GM12878 (cell line): ENCODE measurements at regions of chr4 and their contacts with region 1.

Region 1: GRCh38 chr4:75490155-75490554 is 24.0 kb downstream of the RCHY1 start:
- DNase-seq: no peak
- ATAC-seq: no peak
- H3K4me3 ChIP-seq: no peak overlapping the region
- H3K27ac ChIP-seq: no peak overlapping the region
- H3K4me1 ChIP-seq: no peaks in the 10 kb centered on the region
- H3K27me3 ChIP-seq: no peaks in the 10 kb centered on the region
- CTCF ChIP-seq: no peak; a peak in 1 of 6 replicates
- EP300 ChIP-seq: no peak
- POLR2A ChIP-seq: no peak
- RAD21 ChIP-seq: peak; percentile 34; the same call in 1 of the 2 replicates

Region 2: GRCh38 chr4:75251547-75251946 is 238.6 kb before region 1 on chr4:
- CTCF ChIA-PET with region 1: no interaction called
- POLR2A ChIA-PET with region 1: no interaction called
- RAD21 ChIA-PET with region 1: no interaction called
- SMC1A ChIA-PET with region 1: no interaction called
- in situ Hi-C with region 1: no loop called
- intact Hi-C with region 1: no loop called
- DNase-seq: peak; percentile 37
- ATAC-seq: peak; percentile 94
- H3K4me3 ChIP-seq: no peak overlapping the region
- H3K27ac ChIP-seq: no peak overlapping the region
- H3K4me1 ChIP-seq: peaks cover 9% of the 10 kb centered on the region
- H3K27me3 ChIP-seq: no peaks in the 10 kb centered on the region
- CTCF ChIP-seq: no peak
- EP300 ChIP-seq: peak in 1 of 2 experiments; percentile 46; a peak in 2 of 4 replicates
- POLR2A ChIP-seq: no peak
- RAD21 ChIP-seq: no peak

Region 3: DNA sequence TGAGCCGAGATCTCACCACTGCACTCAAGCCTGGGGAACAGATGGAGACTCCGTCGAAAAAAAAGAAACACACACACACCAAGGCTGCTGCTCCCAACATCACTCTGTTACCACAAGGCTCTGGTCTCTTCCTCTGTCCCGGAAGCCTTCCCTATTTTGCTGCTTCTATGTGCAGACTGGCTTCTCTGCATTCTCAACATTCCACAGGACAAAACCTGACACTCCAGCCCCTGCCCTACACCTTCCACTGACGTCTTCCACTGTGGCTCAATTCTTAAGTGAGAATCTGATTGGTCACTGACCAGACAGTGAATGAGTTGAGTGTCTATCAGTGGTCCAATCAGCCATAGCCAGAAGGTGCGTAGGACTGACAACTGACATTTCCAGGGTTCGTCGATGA is 71.6 kb after region 1 on chr4:
- CTCF ChIA-PET with region 1: no interaction called
- POLR2A ChIA-PET with region 1: no interaction called
- RAD21 ChIA-PET with region 1: no interaction called
- SMC1A ChIA-PET with region 1: no interaction called
- in situ Hi-C with region 1: no loop called
- intact Hi-C with region 1: loop called (anchors 2 kb)
- DNase-seq: no peak
- ATAC-seq: no peak
- H3K4me3 ChIP-seq: no peak overlapping the region
- H3K27ac ChIP-seq: no peak overlapping the region
- H3K4me1 ChIP-seq: no peaks in the 10 kb centered on the region
- H3K27me3 ChIP-seq: no peaks in the 10 kb centered on the region; a peak in 1 of 4 replicates
- CTCF ChIP-seq: no peak
- EP300 ChIP-seq: no peak
- POLR2A ChIP-seq: no peak
- RAD21 ChIP-seq: no peak